Adrenal gland (tissue), 19 donors: ENCODE measurements at regions of chr18 and their contacts with region 1.

Region 1: DNA sequence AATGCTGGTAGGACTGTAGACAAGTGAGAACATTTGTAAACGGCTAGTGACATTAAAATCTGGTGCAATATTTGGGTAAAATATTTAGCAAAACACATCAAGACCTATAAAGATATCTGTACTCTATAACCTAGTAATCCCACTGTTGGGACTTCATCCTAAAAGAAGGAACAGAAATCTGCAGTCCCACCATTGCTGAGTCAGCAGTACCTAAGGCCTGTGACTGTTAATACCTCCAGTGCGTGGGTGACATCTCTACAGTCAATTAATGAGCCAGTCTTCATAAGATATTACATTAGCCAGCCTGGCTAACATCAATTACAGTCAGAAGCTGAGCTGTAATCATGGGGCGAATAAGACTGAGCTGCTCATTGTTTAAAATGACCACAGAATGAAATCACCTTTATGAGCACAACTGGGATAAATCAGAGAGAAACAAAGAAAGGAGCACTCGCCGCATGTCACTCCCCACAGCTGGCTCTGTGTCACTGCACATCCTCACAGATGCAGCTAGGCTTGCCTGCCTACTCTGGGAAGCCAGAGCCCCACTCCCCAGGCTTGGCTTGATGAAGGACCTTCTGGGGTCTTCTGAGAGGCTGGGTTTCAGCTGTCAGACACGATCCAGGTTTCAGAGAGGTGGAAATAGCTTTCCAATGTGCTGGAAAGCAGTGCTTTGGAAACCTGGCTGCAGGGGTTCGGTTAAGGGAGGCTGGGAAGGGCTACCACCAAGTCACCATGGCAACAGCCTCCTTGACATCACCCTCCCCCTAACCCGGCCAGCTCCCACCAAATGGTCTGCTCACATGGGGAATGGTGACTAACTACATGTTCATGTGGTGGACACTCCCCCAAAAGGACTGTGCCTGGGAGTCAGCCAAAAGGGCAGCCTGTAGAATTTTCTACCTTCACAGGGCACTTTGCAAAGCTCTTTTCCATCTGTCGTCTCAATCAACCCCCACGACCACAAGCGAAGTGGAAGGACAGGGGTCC is 145.0 kb downstream of the ZBTB7C start:
- DNase-seq: peak in 1 of 7 donors; percentile 63
- H3K4me3 ChIP-seq: no peak overlapping the region
- H3K27ac ChIP-seq: peak overlapping the region in 1 of 5 donors; percentile 34
- H3K4me1 ChIP-seq: no peaks in the 10 kb centered on the region
- H3K27me3 ChIP-seq: no peaks in the 10 kb centered on the region
- CTCF ChIP-seq: no peak
- POLR2A ChIP-seq: no peak

Region 2: DNA sequence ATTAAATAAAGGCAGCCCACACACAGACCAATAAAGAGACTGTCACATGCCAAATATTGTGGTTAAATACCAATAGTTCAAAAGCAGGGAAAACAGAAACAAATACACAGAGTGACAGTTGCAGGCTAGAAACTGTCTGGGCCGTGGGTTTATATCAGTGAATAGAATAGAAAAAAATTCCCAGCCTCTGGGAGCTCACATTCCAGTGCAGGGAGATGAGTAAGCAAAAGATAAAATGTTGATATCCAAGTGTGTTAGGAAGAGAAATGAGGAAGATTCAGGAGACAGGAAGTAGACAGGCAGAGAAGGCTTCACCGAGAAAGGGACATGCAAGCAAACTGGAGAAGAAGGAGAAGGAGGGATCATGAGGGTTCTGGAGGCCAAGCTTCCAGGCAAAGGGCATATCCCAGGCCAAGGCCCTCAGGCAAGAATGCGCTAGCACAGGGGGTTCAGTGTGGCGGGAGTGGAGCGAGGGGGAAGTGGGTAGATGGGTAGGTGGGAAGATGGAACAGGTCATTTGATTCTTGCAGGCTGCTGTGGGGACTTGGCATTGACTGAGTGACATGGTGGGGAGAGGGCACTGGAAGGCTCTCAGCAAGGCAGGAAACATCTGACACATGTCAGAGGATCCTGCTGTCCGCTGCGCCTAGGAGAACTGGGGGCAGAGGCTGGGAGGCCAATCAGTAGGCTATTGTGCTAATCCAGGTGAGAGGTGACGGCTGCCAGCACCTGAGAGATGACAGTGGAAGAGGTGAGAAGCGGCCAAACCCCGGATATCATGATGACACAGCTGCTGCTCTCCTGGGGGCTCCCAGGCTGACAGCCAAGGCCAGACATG is 55.8 kb after region 1 on chr18:
- intact Hi-C with region 1: loop called in 1 of 2 experiments (anchors 10 kb)
- DNase-seq: no peak
- H3K4me3 ChIP-seq: peak overlapping the region in 1 of 4 donors; percentile 15
- H3K27ac ChIP-seq: peak overlapping the region in 4 of 5 donors; percentile 33 to 87 (median 62)
- H3K4me1 ChIP-seq: peaks cover 13 to 18% of the 10 kb centered on the region in 2 donors
- H3K27me3 ChIP-seq: no peaks in the 10 kb centered on the region
- CTCF ChIP-seq: no peak
- POLR2A ChIP-seq: no peak